IMR-90 (cell line): ENCODE measurements at regions of chr4 and their contacts with region 1.

Region 1: GRCh38 chr4:40648742-40649281 is 19.1 kb upstream of the RBM47 start:
- DNase-seq: no peak
- ATAC-seq: no peak
- H3K4me3 ChIP-seq: no peak overlapping the region
- H3K27ac ChIP-seq: no peak overlapping the region
- H3K4me1 ChIP-seq: no peaks in the 10 kb centered on the region
- H3K27me3 ChIP-seq: peaks cover 7% of the 10 kb centered on the region
- CTCF ChIP-seq: no peak
- POLR2A ChIP-seq: no peak
- RAD21 ChIP-seq: no peak

Region 2: GRCh38 chr4:40530961-40531635 is 117.7 kb before region 1 on chr4:
- CTCF ChIA-PET with region 1: no interaction called
- POLR2A ChIA-PET with region 1: interaction called, 13 read pairs
- dilution Hi-C with region 1: no loop called
- in situ Hi-C with region 1: no loop called
- intact Hi-C with region 1: no loop called
- DNase-seq: no peak
- ATAC-seq: no peak
- H3K4me3 ChIP-seq: no peak overlapping the region
- H3K27ac ChIP-seq: no peak overlapping the region
- H3K4me1 ChIP-seq: peaks cover 4% of the 10 kb centered on the region; the same call in 1 of the 2 replicates
- H3K27me3 ChIP-seq: no peaks in the 10 kb centered on the region
- CTCF ChIP-seq: no peak
- POLR2A ChIP-seq: no peak
- RAD21 ChIP-seq: no peak

Region 3: GRCh38 chr4:40621229-40621591 is 27.6 kb before region 1 on chr4:
- CTCF ChIA-PET with region 1: no interaction called
- POLR2A ChIA-PET with region 1: no interaction called
- dilution Hi-C with region 1: no loop called
- in situ Hi-C with region 1: no loop called
- intact Hi-C with region 1: no loop called
- DNase-seq: no peak
- ATAC-seq: no peak
- H3K4me3 ChIP-seq: no peak overlapping the region
- H3K27ac ChIP-seq: no peak overlapping the region
- H3K4me1 ChIP-seq: peaks cover 10% of the 10 kb centered on the region
- H3K27me3 ChIP-seq: no peaks in the 10 kb centered on the region; the same call in 1 of the 2 replicates
- CTCF ChIP-seq: no peak
- POLR2A ChIP-seq: no peak
- RAD21 ChIP-seq: no peak